CD4-positive, alpha-beta T cell (primary cell): ENCODE measurements at regions of chr11 and their contacts with region 1.

Region 1: DNA sequence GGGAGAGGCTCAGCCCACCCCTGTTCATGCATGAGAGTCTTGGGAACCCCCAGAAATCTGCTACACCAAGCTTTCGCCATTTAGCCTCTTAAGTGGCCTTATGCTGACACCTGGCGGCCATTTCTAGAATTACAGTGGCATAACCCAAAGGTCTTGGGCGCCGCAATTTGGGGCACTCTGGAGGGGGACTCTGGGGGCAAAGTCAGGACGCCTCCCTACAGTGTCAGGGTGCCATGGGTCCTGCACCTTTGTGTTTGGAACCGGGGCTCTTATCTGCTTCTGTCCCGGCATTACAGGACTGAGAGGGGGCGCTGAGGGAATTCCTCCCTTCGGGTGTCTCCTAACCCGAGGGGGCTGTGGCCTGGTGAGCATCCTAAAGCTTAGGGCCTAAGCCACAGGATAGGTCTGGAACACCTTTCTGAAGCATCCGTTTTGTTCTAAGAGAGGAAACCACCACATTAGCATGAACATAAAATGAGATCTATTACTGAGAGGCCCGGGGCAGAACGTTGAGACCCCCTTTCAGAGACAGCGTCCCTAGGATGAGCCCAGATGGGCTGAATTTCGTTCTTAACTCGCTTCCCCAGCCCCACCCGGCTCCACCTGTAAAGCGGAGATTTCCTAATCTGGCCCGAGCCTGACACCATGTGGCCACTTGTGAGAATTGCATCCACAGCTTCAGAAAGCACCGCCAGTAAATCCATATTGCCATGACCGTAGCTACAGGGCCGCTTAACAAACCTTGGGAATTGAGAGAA is 9.3 kb downstream of the INS start:
- DNase-seq: peak; percentile 69 to 89 (median 76)
- ATAC-seq: peak; percentile 89
- H3K4me3 ChIP-seq: peak overlapping the region; percentile 8
- H3K4me3 Mint-ChIP-seq: peak overlapping the region; percentile 6
- H3K27ac ChIP-seq: no peak overlapping the region
- H3K27ac Mint-ChIP-seq: no peak overlapping the region
- H3K4me1 ChIP-seq: peaks cover 10% of the 10 kb centered on the region
- H3K4me1 Mint-ChIP-seq: peaks cover 9% of the 10 kb centered on the region
- H3K27me3 ChIP-seq: peaks cover 41 to 44% of the 10 kb centered on the region in 2 experiments
- H3K27me3 Mint-ChIP-seq: peaks cover 42% of the 10 kb centered on the region
- CTCF ChIP-seq: peak; percentile 78

Region 2: DNA sequence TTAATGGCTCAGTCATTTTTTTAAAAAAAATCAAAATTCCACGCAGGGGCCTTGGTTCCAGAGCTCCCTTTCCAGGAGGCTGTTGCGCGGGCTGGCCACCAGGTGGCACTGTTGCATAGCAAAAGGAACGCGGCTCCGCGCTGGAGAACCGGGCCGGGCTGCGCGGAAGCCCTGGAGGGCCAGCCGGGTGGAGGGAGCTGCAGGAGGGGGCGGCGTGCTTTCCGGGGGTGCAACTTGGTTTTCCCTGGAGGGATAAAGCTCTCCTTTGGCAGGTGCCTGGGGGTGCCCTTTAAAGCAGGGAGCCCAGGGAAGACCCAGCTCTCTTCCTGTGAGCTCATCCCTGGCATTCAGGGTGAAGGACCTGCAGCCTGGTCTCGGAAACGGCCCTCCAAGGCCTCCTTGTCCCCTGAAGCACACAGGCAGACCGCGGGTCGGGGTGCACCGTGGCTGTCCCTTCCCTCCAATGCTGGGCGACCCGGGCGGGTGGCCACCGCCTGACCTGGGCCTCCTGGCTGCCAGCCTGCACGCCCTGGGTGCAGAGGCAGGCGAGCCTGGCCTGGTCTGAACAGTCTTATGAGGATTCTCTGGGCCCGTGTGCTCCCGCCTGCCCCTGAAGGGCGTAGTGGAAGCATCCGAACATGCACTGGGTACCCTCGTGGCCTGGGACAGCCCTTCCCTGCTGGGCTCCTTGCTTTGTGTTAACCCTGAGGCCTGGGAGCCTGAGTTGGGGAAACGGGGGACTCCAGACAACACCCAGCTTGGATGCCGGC is 498.7 kb before region 1 on chr11:
- CTCF ChIA-PET with region 1: interaction called, 19 read pairs
- POLR2A ChIA-PET with region 1: interaction called, 4 read pairs
- intact Hi-C with region 1: loop called (anchors 1 to 2 kb)
- DNase-seq: peak; percentile 60 to 86 (median 74)
- ATAC-seq: peak; percentile 98
- H3K4me3 ChIP-seq: no peak overlapping the region
- H3K4me3 Mint-ChIP-seq: no peak overlapping the region
- H3K27ac ChIP-seq: no peak overlapping the region
- H3K27ac Mint-ChIP-seq: no peak overlapping the region
- H3K4me1 ChIP-seq: peaks cover 6% of the 10 kb centered on the region
- H3K4me1 Mint-ChIP-seq: no peaks in the 10 kb centered on the region
- H3K27me3 ChIP-seq: no peaks in the 10 kb centered on the region
- H3K27me3 Mint-ChIP-seq: peaks cover 12% of the 10 kb centered on the region
- CTCF ChIP-seq: peak; percentile 98

Region 3: DNA sequence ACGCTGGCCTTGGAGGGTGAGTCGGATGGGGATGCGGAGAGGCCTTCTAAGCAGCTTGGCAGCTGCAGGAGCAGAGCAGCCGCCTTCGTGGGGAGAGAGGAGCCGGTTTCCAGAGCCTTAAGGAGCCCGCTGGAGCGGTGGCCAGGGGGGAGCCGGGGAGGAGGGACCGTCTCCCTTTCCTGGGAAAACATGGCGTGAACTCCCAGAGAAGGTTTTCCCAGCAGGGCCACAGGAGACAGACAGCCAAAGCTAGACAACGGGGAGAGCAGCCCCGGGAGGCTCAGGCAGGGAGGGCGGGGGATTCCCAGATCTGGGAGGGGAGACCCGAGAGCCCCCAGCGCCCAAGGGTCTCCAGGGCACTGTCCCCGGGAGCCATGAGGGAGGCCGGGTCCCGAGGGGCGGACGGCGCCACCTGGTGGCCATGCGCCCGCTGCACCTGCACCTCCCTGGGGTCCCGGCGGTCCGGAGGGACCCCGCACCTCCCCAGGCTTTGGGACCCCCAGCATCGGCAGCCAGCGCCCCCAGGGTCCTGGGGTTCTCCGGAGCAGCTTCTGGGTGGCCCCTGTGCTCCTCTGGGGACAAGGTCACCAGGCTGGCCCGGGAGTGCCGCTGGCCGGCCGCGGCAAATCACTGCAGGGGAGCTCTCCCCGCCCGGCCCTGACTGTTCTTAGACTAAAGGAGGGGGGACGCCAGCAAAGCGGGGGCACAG is 319.3 kb before region 1 on chr11:
- CTCF ChIA-PET with region 1: interaction called, 11 read pairs
- POLR2A ChIA-PET with region 1: no interaction called
- intact Hi-C with region 1: loop called (anchors 1 kb)
- DNase-seq: peak; percentile 45 to 84 (median 64)
- ATAC-seq: peak; percentile 75
- H3K4me3 ChIP-seq: no peak overlapping the region
- H3K4me3 Mint-ChIP-seq: no peak overlapping the region
- H3K27ac ChIP-seq: no peak overlapping the region
- H3K27ac Mint-ChIP-seq: no peak overlapping the region
- H3K4me1 ChIP-seq: peaks cover 10% of the 10 kb centered on the region
- H3K4me1 Mint-ChIP-seq: no peaks in the 10 kb centered on the region
- H3K27me3 ChIP-seq: peaks cover 8 to 16% of the 10 kb centered on the region in 2 experiments
- H3K27me3 Mint-ChIP-seq: peaks cover 5% of the 10 kb centered on the region
- CTCF ChIP-seq: peak; percentile 97

Region 4: DNA sequence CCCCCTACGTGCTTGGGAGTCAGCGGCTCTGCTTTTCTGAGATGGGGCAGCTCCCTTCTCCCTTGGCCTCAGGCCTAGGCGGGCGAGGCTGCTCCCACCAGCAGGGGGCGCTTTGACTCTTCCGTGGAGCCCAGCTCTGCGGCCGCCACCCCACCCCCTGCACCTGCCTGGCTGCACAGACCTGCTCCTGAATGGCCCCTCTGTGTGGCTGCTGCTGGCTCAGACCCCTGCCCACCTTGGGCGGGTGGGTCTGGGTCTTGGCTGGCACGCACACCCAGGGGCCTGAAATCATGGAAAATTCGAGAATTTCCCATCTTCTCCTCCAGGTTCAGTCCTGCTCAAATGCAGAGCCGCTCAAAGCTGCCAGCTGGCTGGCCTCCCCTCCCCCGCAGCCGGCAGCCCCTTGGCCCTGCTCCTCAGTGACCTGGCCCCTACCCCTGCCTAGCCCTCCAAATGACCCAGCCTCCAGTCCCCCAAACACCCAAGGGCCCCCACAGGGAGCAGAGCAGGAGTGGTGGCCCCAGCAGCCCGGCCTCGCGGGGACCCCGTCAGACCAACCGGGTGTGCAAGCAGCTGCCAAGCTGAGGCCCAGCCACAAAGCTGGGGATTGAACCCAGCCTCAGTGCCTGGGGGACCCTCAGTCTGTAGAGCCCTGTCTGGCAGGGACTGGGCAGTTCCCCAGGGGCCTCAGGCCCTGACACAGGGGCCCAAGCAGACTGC is 269.0 kb before region 1 on chr11:
- CTCF ChIA-PET with region 1: interaction called, 15 read pairs
- POLR2A ChIA-PET with region 1: interaction called, 3 read pairs
- intact Hi-C with region 1: loop called (anchors 1 to 5 kb)
- DNase-seq: peak; percentile 71 to 92 (median 76)
- ATAC-seq: peak; percentile 91
- H3K4me3 ChIP-seq: no peak overlapping the region
- H3K4me3 Mint-ChIP-seq: no peak overlapping the region
- H3K27ac ChIP-seq: peak overlapping the region in 1 of 2 donors; percentile 29
- H3K27ac Mint-ChIP-seq: peak overlapping the region; percentile 57
- H3K4me1 ChIP-seq: peaks cover 47% of the 10 kb centered on the region
- H3K4me1 Mint-ChIP-seq: peaks cover 16% of the 10 kb centered on the region
- H3K27me3 ChIP-seq: no peaks in the 10 kb centered on the region
- H3K27me3 Mint-ChIP-seq: no peaks in the 10 kb centered on the region
- CTCF ChIP-seq: peak; percentile 93

Region 5: GRCh38 chr11:2092956-2093412 is 58.7 kb before region 1 on chr11:
- CTCF ChIA-PET with region 1: interaction called, 3 read pairs
- POLR2A ChIA-PET with region 1: no interaction called
- intact Hi-C with region 1: loop called in 1 of 2 experiments (anchors 2 kb)
- DNase-seq: peak; percentile 54 to 84 (median 71)
- ATAC-seq: peak; percentile 89
- H3K4me3 ChIP-seq: no peak overlapping the region
- H3K4me3 Mint-ChIP-seq: no peak overlapping the region
- H3K27ac ChIP-seq: no peak overlapping the region
- H3K27ac Mint-ChIP-seq: no peak overlapping the region
- H3K4me1 ChIP-seq: peaks cover 18% of the 10 kb centered on the region
- H3K4me1 Mint-ChIP-seq: peaks cover 19% of the 10 kb centered on the region
- H3K27me3 ChIP-seq: no peaks in the 10 kb centered on the region
- H3K27me3 Mint-ChIP-seq: peaks cover 8% of the 10 kb centered on the region
- CTCF ChIP-seq: no peak